ENCODE measurements at regions of chr16 and their contacts with region 1.

Region 1: GRCh38 chr16:48452977-48453760 is 68.0 kb upstream of the SIAH1 start:
- DNase-seq: no peak
- H3K4me3 Mint-ChIP-seq: no peak overlapping the region
- H3K27ac Mint-ChIP-seq: no peak overlapping the region
- H3K4me1 Mint-ChIP-seq: peaks cover 12% of the 10 kb centered on the region
- H3K27me3 Mint-ChIP-seq: peaks cover 8% of the 10 kb centered on the region

Region 2: DNA sequence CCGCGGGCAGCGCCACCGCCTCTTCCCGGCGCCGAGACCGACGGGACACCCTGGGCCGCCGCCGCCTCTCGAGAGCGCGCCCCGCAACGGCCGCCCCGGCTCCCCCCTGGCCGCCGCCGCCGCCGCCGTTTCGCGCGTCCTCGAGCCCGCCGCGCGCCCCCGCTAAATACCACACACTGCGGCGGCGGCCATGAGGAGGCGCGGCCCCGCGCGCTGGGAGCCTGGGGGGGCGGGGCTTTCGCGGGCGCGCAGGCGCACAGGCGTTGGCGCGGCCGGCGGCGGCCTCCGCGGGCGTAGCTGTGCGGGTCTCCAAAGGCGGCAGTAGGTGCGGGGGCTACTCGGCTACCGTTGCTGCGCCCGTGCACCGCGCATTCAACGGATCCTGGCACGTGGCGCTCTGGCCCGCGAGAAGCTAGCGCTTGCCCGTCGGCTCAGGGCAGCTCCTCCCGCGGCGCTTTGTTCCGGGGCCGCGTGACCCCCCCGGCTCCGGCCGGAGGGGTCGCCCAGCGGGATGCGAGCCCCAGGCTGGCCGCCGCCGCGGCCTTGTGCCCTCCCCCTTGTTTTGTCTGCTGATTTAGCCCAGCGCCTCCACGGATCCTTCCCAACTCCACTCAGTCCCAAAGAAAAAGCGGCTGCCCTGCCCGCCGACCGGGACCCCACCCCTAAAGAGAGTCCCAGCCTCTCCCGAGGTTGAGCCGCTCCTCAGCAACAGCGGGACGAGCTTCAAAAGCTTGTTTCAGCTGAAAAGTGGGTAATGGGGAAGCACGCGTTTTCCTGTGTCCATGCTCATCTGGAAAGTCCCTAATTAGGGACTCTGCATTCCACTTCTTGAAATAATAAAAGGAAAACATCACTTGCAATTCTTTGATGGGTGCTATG is 67.7 kb before region 1 on chr16 and contains the start of gene SIAH1:
- CTCF ChIA-PET with region 1: no interaction called
- intact Hi-C with region 1: loop called (anchors 1 kb)
- DNase-seq: peak; percentile 83
- H3K4me3 Mint-ChIP-seq: peak within 1 kb of the TSS; percentile 89
- H3K27ac Mint-ChIP-seq: peak within 1 kb of the TSS; percentile 90
- H3K4me1 Mint-ChIP-seq: peaks cover 22% of the 10 kb centered on the region
- H3K27me3 Mint-ChIP-seq: no peaks in the 10 kb centered on the region
- total RNA-seq, gene SIAH1: 13.7 to 14.6 TPM

Region 3: DNA sequence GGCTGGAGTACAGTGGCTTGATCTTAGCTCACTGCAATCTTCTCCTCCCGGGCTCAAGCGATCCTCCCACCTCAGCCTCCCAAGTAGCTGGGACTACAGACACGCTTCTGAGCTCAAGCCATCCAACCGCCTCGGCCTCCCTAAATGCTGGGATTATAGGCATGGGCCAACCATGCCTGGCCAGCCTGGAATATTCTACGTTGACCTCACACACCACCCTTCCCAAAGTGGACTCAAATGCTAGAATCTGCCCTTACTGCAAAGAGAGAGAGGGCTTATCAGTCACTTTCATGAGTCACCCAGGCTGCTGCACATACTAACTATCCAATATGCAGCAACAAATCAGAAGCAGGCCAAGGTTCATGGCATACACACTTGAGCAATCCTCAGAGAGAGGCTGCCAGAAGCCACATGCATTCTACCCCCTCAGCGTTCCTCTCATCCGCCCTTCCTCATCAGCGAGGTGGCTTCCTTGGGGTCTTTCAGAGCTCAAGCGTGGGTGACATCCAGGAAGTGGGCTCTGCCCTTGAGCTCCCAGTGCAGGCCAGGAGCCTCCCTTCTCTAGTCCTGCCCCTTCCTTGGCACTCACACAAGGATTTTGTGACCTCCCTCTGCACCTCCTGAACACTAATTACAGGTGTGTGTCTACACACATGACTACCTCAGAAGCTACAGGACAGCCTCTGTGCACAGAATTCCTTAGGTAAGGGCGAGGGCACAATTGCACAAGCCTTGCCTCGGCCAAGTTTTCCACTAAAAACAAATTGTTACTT is 43.1 kb before region 1 on chr16:
- CTCF ChIA-PET with region 1: no interaction called
- intact Hi-C with region 1: loop called (anchors 1 kb)
- DNase-seq: no peak
- H3K4me3 Mint-ChIP-seq: no peak overlapping the region
- H3K27ac Mint-ChIP-seq: no peak overlapping the region
- H3K4me1 Mint-ChIP-seq: peaks cover 7% of the 10 kb centered on the region
- H3K27me3 Mint-ChIP-seq: no peaks in the 10 kb centered on the region

Region 4: GRCh38 chr16:48479955-48480354 is 26.8 kb after region 1 on chr16:
- CTCF ChIA-PET with region 1: no interaction called
- intact Hi-C with region 1: loop called (anchors 1 kb)
- DNase-seq: no peak
- H3K4me3 Mint-ChIP-seq: no peak overlapping the region
- H3K27ac Mint-ChIP-seq: no peak overlapping the region
- H3K4me1 Mint-ChIP-seq: peaks cover 4% of the 10 kb centered on the region
- H3K27me3 Mint-ChIP-seq: peaks cover 7% of the 10 kb centered on the region

Region 5: GRCh38 chr16:48499923-48500381 is 46.8 kb after region 1 on chr16:
- CTCF ChIA-PET with region 1: no interaction called
- intact Hi-C with region 1: no loop called
- DNase-seq: no peak
- H3K4me3 Mint-ChIP-seq: no peak overlapping the region
- H3K27ac Mint-ChIP-seq: no peak overlapping the region
- H3K4me1 Mint-ChIP-seq: no peaks in the 10 kb centered on the region
- H3K27me3 Mint-ChIP-seq: no peaks in the 10 kb centered on the region

Region 6: DNA sequence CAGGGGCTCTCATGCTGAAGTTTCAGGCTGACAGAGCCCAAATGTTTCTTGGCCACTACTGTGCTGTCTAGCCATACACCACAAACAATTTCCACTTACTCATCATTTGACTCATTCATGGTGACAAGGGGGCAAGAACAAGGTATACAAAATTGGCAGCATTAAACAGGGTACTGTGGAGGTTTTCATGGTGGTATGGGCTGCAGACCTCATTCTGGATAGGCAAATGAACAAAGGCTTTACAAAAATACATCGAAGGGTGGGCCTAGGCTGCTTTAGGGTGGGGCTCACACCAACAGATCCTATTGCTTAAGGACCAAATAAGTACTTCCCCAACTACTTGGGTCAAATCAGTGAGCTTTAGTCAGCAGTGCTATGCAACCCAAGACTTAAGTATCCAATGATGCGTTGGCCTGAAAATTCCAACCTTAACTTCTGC is 103.8 kb after region 1 on chr16:
- CTCF ChIA-PET with region 1: interaction called, 3 read pairs
- intact Hi-C with region 1: loop called (anchors 1 kb)
- DNase-seq: peak; percentile 43
- H3K4me3 Mint-ChIP-seq: no peak overlapping the region
- H3K27ac Mint-ChIP-seq: peak overlapping the region; percentile 58
- H3K4me1 Mint-ChIP-seq: peaks cover 80% of the 10 kb centered on the region
- H3K27me3 Mint-ChIP-seq: no peaks in the 10 kb centered on the region

Measured in activated naive CD4-positive, alpha-beta T cell treated with anti-CD3 and anti-CD28 coated beads for 36 hours (primary cell).